ENCODE measurements at regions of chr7 and their contacts with region 1.

Region 1: GRCh38 chr7:148763622-148764021 is 64.9 kb downstream of the CUL1 start:
- H3K4me3 Mint-ChIP-seq: no peak overlapping the region
- H3K27ac Mint-ChIP-seq: no peak overlapping the region
- H3K4me1 Mint-ChIP-seq: no peaks in the 10 kb centered on the region
- H3K27me3 Mint-ChIP-seq: no peaks in the 10 kb centered on the region

Region 2: DNA sequence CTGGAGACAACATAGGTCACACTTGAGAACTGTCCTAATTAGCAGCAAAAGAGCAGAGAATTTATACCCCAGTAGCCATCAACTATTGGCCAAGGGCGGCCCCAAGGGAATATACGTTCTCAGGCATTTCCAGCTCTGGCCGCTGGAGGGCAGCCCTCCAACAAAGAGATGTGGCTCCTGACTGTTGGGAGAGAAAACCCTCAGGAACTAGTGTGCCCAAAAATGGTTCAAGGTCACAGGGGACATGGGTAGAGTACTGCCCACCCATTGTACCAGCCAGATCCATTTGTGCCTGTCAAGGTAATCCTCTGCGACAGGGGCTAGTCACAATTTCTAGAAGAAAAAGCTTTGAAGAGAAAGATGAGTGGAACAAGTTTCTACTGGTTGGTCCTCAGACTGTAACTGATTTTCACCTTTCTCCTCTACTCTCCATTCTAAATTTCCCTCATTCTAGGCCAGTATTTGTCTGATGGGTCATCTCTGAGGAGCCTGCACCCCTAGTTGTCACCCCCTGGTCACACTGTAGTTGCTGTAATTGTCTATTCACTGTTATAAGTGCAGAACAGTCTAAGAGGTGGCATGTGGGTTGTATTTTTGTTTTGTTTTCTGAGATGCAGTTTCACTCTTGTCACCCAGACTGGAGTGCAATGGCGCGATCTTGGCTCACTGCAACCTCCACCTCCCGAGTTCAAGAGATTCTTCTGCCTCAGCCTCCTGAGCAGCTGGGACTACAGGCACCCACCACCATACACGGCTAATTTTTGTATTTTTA is 187.8 kb before region 1 on chr7:
- intact Hi-C with region 1: loop called (anchors 10 kb)
- H3K4me3 Mint-ChIP-seq: no peak overlapping the region
- H3K27ac Mint-ChIP-seq: peak overlapping the region; percentile 53
- H3K4me1 Mint-ChIP-seq: peaks cover 16% of the 10 kb centered on the region
- H3K27me3 Mint-ChIP-seq: no peaks in the 10 kb centered on the region

Region 3: GRCh38 chr7:148867596-148868377 is 104.2 kb after region 1 on chr7:
- intact Hi-C with region 1: no loop called
- H3K4me3 Mint-ChIP-seq: no peak overlapping the region
- H3K27ac Mint-ChIP-seq: peak overlapping the region; percentile 37
- H3K4me1 Mint-ChIP-seq: peaks cover 24% of the 10 kb centered on the region
- H3K27me3 Mint-ChIP-seq: no peaks in the 10 kb centered on the region

Measured in dendritic cell treated with granulocyte-macrophage colony-stimulating factor and Interleukin-4, amounts not matched to agents 40 ng/mL and 50 ng/mL, for 4 days (primary cell).